ENCODE measurements at regions of chr3 and their contacts with region 1.

Region 1: DNA sequence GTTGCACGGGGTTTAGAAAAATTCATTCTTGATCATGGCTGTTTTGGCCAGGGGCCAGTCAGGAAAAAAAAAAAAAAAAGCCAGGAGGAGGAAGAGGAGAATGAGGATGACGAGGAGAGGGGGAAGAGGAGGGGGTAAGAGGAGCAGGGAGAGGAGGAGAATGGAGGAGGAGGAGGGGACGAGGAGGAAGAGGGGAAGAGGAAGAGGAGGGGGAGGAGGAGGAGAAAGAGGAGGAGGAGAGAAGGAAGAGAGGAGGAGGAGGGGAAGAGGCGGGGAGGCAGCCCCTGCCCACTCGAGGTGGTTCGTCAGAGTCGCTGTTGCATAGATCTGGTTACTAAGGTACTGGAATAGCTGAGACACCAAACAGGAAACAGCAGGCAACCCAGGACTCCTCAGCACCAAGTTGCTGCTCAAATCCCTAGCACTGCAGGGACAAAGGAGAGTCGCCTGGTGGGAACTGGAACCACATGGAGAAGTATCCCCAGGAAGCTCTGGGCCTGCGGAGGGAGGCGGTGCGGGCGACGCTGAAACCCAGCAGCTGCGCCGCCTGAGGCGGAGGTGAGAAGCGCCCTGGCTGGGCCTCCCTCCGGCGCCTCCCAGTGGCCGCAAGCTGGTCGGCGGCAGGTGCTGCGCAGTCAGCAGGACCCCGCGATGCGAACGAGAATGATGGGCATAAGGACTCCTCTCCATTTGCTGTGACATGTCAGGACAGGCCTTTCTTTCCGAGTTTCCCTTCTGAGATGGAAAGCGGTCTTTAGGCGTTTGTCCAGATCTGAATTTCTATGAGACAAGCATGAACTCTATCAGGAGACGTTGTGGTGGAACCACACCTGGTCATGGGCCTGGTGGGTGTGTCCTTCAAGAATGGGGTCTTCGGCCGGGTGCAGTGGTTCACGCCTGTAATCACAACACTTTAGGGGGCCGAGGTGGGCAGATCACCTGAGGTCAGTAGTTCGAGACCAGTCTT is 17.5 kb downstream of the FAM240A start:
- DNase-seq: peak; percentile 82
- ATAC-seq: peak; percentile 100
- H3K4me3 Mint-ChIP-seq: peak overlapping the region; percentile 37
- H3K27ac Mint-ChIP-seq: no peak overlapping the region
- H3K4me1 Mint-ChIP-seq: peaks cover 11% of the 10 kb centered on the region
- H3K27me3 Mint-ChIP-seq: peaks cover 10% of the 10 kb centered on the region

Region 2: DNA sequence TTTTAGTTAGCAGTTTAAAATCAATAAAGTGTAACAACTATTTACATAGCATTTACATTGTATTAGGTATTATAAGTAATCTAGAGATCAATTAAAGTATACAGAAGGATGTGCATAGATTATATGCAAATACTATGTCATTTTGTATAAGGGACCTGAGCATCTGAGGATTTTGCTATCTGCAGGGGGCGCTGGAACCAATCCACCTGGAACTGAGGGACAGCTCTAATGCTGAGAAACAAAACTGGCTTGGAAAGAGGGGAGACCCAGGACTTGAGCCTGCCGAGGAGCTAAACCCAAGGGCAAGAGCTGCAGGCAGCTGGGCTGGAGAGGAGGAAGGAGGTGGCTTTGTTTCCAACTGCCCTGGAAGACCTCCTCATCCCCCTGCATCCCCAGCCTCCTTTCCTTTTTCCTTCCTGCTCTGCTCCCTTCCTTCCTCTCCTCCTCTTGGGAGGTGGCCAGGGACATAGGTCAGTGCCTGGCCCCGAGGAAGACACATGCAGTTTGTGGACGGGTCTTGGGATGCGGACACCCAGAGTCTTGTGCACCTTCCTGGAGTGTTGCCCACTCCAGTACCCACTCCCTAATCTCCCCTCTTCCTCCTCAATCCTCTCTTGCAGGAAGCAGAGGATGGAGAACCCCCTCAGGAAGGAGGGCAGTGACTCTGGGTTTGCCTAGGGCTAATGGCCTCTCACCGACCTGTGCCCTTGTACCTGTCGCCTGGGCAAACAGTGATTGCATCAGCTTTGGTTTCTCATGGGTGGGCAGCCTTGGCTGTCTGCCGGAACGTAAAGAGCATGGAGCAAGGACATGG is 132.9 kb before region 1 on chr3:
- CTCF ChIA-PET with region 1: interaction called, 22 read pairs
- DNase-seq: peak; percentile 70
- ATAC-seq: peak; percentile 57
- H3K4me3 Mint-ChIP-seq: no peak overlapping the region
- H3K27ac Mint-ChIP-seq: no peak overlapping the region
- H3K4me1 Mint-ChIP-seq: peaks cover 4% of the 10 kb centered on the region
- H3K27me3 Mint-ChIP-seq: peaks cover 6% of the 10 kb centered on the region

Region 3: DNA sequence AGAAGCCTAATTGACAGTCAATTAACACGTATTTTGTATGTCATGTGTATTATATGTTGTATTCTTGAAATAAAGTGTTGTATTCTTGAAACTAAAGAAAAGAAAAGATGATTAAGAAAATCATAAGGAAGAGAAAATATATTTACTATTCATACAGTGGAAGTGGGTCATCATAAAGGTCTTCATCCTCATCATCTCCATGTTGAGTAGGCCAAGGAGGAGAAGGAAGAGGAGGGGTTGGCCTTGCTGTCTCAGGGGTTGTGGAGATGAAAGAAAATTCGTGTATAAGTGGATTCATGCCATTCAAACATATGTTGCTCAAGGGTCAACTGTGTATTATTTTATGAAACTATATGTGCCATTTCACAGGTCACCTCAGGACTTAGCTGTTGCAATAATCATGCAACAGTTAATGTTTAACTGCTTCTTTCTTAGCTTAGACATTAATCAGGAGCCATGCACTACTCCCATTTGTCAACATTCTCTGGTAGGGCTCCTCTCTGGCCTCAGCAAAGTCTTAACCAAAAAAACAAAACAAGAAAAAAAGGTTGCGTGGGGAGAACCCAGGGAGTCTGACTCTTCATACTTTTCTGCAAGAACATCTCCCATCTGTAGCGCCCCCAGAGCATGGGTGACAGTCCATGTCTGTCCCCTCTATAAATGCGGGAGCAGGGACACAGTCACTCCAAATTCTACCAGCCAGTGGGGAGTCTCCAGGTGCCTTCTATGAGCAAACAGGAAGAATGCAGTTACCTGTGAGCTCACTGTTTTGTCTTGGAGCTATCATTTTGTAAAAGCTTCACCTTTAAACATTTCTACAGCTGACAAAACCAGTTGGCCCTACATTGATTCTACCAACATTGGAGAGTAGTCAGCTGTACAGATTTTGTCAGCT is 43.8 kb before region 1 on chr3:
- CTCF ChIA-PET with region 1: interaction called, 10 read pairs
- DNase-seq: no peak
- ATAC-seq: no peak
- H3K4me3 Mint-ChIP-seq: no peak overlapping the region
- H3K27ac Mint-ChIP-seq: no peak overlapping the region
- H3K4me1 Mint-ChIP-seq: no peaks in the 10 kb centered on the region
- H3K27me3 Mint-ChIP-seq: peaks cover 26% of the 10 kb centered on the region